ENCODE measurements at regions of chr16 and their contacts with region 1.

Region 1: DNA sequence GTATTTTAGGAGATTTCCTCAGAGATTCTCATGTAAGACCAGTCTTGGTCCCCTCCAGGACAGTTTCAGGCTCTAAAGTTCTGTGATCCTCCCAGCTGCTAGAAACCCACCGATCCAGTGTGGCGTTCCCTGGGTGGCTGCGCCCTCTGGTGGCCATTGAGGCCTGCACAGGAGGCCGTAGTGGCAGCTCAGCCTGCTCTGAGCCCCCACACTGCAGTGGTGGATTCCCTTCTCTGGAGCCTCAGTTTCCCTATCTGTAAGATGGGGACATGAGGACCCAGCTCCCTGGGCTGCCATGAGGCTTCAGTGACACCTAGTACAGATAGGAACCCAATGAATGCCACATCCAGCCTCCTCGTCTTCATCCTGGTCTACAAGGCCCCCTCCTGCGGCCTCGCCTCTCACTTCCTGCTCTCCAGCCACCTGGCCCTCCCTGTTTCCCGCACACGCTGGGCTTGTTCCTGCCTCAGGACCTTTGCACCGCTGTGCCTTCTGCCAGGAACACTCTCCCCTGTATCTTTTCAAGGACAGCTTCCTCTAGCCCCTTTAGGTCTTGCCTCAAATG is 16.5 kb downstream of the CCDC102A start:
- DNase-seq: peak; percentile 88
- ATAC-seq: peak; percentile 82

Region 2: DNA sequence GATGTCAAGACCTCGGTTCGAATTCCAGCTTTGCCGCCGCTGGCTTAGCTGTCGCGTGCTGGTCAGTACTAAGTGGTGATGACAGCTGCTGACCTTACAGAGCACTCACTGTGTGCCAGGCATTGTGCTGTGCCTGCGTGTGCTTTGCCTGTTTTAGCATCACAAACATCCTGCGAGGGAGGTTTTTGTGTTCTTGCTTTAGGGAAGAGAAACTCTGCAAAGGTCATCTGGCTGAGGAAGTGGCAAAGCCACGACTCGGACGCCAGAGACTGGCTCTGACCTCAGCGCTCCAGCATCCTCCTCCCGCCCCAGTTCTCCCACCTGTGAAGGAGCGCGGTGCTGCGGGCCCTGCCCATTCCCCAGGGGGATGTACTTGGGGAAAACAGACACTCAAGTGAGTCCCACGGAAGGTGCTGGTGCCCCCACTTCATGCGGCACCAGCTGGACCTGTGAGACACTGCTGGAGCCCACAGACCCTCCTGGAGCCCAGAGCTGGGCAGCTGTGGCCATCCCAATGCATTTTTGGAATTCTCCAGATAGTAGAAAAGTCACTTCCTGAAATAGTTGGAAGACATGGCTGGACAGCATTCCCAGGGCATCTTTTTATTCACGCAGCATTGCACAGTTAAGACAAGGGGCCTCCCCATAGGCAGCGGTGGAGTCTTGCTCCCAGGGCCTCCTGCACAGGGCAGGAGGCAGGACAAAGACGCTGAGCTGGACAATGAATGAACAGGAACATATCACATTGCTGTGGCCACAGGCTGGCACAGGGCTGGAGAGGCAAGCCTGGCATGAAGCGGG is 607.9 kb before region 1 on chr16:
- intact Hi-C with region 1: no loop called
- DNase-seq: peak; percentile 64
- ATAC-seq: peak; percentile 74

Region 3: GRCh38 chr16:57422026-57422944 is 97.6 kb before region 1 on chr16:
- intact Hi-C with region 1: loop called (anchors 2 kb)
- DNase-seq: no peak
- ATAC-seq: peak; percentile 40

Measured in Right ventricle myocardium superior (tissue), 1 donor.